ENCODE measurements at regions of chr4 and their contacts with region 1.

Region 1: GRCh38 chr4:242121-242848 is 63.0 kb downstream of the ZNF732 start:
- DNase-seq: peak; percentile 34
- ATAC-seq: peak; percentile 90
- H3K4me3 ChIP-seq: peak overlapping the region; percentile 41; the same call in 1 of the 2 replicates
- H3K27ac ChIP-seq: no peak overlapping the region
- H3K4me1 ChIP-seq: no peaks in the 10 kb centered on the region
- H3K27me3 ChIP-seq: no peaks in the 10 kb centered on the region
- CTCF ChIP-seq: peak; percentile 55 to 76 (median 69); a peak in 5 of 6 replicates
- EP300 ChIP-seq: no peak
- POLR2A ChIP-seq: no peak
- RAD21 ChIP-seq: peak; percentile 80

Region 2: GRCh38 chr4:200936-201335 is 41.3 kb before region 1 on chr4:
- CTCF ChIA-PET with region 1: no interaction called
- POLR2A ChIA-PET with region 1: no interaction called
- RAD21 ChIA-PET with region 1: no interaction called
- SMC1A ChIA-PET with region 1: no interaction called
- in situ Hi-C with region 1: no loop called
- intact Hi-C with region 1: no loop called
- DNase-seq: no peak
- ATAC-seq: no peak
- H3K4me3 ChIP-seq: no peak overlapping the region
- H3K27ac ChIP-seq: no peak overlapping the region
- H3K4me1 ChIP-seq: no peaks in the 10 kb centered on the region
- H3K27me3 ChIP-seq: no peaks in the 10 kb centered on the region
- CTCF ChIP-seq: no peak
- EP300 ChIP-seq: no peak
- POLR2A ChIP-seq: no peak
- RAD21 ChIP-seq: no peak

Region 3: DNA sequence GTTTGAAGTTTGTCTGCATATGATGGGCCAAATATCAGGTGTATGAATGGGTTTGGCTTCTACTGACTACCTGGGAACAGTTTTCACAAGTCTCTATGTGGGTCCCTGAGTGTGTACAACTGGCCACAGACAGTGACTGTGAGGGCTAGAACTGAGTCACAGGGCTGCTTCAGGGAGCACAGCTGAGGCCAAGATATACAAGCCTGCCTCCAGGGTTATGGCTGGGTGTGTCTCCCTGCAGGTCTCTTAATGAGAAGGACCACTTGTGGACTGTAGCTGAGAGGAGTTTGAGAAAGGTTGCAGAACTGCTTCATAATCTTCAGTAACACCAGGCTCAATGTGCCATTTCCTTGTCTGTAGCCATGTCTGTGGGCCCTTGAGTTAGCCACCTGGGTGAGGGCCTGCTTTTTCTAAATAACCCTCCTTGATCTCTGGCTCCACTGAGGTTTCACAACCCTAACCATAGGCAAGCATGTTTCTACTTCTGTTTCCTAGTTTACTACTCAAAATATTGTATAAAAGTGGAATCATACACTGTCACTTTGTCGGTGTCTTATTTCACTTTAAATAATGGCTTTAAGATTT is 18.3 kb before region 1 on chr4:
- CTCF ChIA-PET with region 1: no interaction called
- POLR2A ChIA-PET with region 1: no interaction called
- RAD21 ChIA-PET with region 1: no interaction called
- SMC1A ChIA-PET with region 1: no interaction called
- in situ Hi-C with region 1: no loop called
- intact Hi-C with region 1: no loop called
- DNase-seq: no peak
- ATAC-seq: no peak
- H3K4me3 ChIP-seq: no peak overlapping the region
- H3K27ac ChIP-seq: no peak overlapping the region
- H3K4me1 ChIP-seq: no peaks in the 10 kb centered on the region
- H3K27me3 ChIP-seq: no peaks in the 10 kb centered on the region
- CTCF ChIP-seq: no peak
- EP300 ChIP-seq: no peak
- POLR2A ChIP-seq: no peak
- RAD21 ChIP-seq: no peak

Region 4: DNA sequence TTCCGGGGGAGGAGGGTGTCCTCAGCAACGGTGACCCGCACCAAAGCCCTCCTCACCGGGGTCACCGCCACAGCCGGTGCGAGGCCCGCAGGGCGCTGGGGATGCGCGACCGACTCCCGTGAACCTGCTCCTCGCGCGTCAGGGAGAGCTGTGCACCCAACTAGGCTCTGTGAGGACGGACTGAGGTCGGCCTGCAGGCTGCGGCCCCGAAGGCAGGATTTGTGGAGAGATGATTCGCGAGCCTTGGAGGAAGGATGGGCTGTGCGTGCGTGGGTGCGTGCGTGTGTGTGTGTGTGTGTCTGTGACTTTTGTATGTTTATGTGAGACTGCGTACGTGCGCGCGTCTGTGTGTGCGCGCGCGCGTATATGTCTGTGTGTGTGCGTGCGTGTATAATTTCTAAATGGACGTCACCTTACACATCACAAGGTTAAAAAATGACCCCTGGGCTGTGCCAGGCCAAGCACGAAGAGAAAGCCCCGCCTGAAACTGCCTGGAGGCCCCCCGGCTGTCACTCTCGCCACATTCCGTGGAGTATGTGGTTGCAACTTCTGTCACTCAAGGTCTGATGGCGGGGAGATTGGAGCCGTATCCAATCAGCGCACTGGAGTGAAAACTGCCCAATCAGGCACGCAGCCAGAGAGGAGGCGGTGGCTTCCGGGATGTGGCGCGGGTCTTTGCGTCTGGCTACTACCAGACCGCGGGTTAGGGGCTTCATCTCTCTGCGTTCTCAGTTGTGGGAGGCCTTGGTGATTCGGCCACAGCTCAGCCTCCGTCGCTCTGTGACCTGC is 95.1 kb after region 1 on chr4 and contains the start of gene ZNF141:
- CTCF ChIA-PET with region 1: interaction called, 4 read pairs
- POLR2A ChIA-PET with region 1: no interaction called
- RAD21 ChIA-PET with region 1: no interaction called
- SMC1A ChIA-PET with region 1: no interaction called
- in situ Hi-C with region 1: no loop called
- intact Hi-C with region 1: loop called (anchors 5 kb)
- DNase-seq: peak; percentile 95
- ATAC-seq: peak; percentile 97
- H3K4me3 ChIP-seq: peak within 1 kb of the TSS; percentile 82
- H3K27ac ChIP-seq: peak within 1 kb of the TSS; percentile 91
- H3K4me1 ChIP-seq: no peaks in the 10 kb centered on the region
- H3K27me3 ChIP-seq: no peaks in the 10 kb centered on the region
- CTCF ChIP-seq: no peak
- EP300 ChIP-seq: peak; percentile 56 to 71; a peak in 3 of 4 replicates
- POLR2A ChIP-seq: peak; percentile 81
- RAD21 ChIP-seq: no peak
- polyA plus RNA-seq, gene ZNF141: 3.9 to 5.4 TPM

Measured in GM12878 (cell line).